Activated T-helper 1 cell treated with anti-CD3 and anti-CD28 coated beads, Interleukin-12 subunit alpha, Interleukin-12 subunit beta, Interleukin-2, Interleukin-4 antibody, amounts not matched to agents 30 ng/mL and 10 ng/mL and 1 ng/mL, durations not matched to agents 14 hours and 24 hours and 36 hours (primary cell): ENCODE measurements at regions of chr12 and their contacts with region 1.

Region 1: GRCh38 chr12:40946612-40947194 is 241.4 kb upstream of the PDZRN4 start:
- DNase-seq: no peak
- H3K4me3 Mint-ChIP-seq: no peak overlapping the region
- H3K27ac Mint-ChIP-seq: no peak overlapping the region
- H3K4me1 Mint-ChIP-seq: no peaks in the 10 kb centered on the region
- H3K27me3 Mint-ChIP-seq: no peaks in the 10 kb centered on the region

Region 2: GRCh38 chr12:42568952-42569915 is 1622.5 kb after region 1 on chr12:
- intact Hi-C with region 1: loop called (anchors 10 kb)
- DNase-seq: no peak
- H3K4me3 Mint-ChIP-seq: no peak overlapping the region
- H3K27ac Mint-ChIP-seq: no peak overlapping the region
- H3K4me1 Mint-ChIP-seq: no peaks in the 10 kb centered on the region
- H3K27me3 Mint-ChIP-seq: peaks cover 4% of the 10 kb centered on the region